Colonic mucosa (tissue), 4 donors: ENCODE measurements at regions of chr6 and their contacts with region 1.

Region 1: GRCh38 chr6:4021133-4021853 is 57.6 kb downstream of the FAM217A start:
- DNase-seq: peak; percentile 98
- H3K4me3 ChIP-seq: peak overlapping the region; percentile 55
- H3K27ac ChIP-seq: peak overlapping the region; percentile 97
- H3K4me1 ChIP-seq: peaks cover 14% of the 10 kb centered on the region
- H3K27me3 ChIP-seq: no peaks in the 10 kb centered on the region
- CTCF ChIP-seq: no peak

Region 2: GRCh38 chr6:4135665-4136353 is 114.5 kb after region 1 on chr6:
- intact Hi-C with region 1: loop called (anchors 10 kb)
- DNase-seq: peak; percentile 98
- H3K4me3 ChIP-seq: peak overlapping the region; percentile 56
- H3K27ac ChIP-seq: peak overlapping the region; percentile 81
- H3K4me1 ChIP-seq: peaks cover 6% of the 10 kb centered on the region
- H3K27me3 ChIP-seq: no peaks in the 10 kb centered on the region
- CTCF ChIP-seq: no peak

Region 3: GRCh38 chr6:4225161-4225872 is 204.0 kb after region 1 on chr6:
- intact Hi-C with region 1: no loop called
- DNase-seq: no peak
- H3K4me3 ChIP-seq: no peak overlapping the region
- H3K27ac ChIP-seq: no peak overlapping the region
- H3K4me1 ChIP-seq: no peaks in the 10 kb centered on the region
- H3K27me3 ChIP-seq: no peaks in the 10 kb centered on the region
- CTCF ChIP-seq: no peak